HEK293 (cell line): ENCODE measurements at regions of chr18 and their contacts with region 1.

Region 1: GRCh38 chr18:54405290-54405689 is 47.6 kb downstream of the C18orf54 start:
- H3K4me3 ChIP-seq: no peak overlapping the region
- H3K27ac ChIP-seq: no peak overlapping the region
- H3K4me1 ChIP-seq: no peaks in the 10 kb centered on the region
- CTCF ChIP-seq: no peak

Region 2: GRCh38 chr18:54303408-54303807 is 101.9 kb before region 1 on chr18:
- CTCF ChIA-PET with region 1: no interaction called
- POLR2A ChIA-PET with region 1: no interaction called
- H3K4me3 ChIP-seq: no peak overlapping the region
- H3K27ac ChIP-seq: no peak overlapping the region
- H3K4me1 ChIP-seq: no peaks in the 10 kb centered on the region
- CTCF ChIP-seq: no peak

Region 3: DNA sequence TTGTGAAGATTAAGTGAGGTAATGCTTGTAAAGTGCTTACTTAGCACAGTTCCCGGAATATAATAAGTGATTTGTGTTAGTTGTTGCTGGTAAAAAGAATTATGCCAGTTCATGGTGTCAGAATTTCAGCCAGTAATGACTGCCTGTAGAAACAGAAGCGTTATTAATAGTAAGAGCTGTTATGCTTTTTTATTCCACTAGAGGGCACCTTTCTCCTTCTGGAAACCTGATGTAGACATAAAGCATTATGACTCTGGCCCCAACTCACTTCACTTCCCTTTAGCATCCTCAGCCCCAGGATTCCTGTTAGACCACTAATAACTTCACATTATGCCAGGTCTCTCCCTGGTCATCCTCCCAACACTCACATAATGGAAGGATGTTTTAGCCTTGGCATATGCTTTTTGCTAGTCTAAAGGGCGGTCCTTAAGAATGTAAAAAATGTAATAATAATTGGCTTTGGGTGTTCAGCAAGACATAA is 12.7 kb before region 1 on chr18:
- CTCF ChIA-PET with region 1: interaction called, 12 read pairs
- POLR2A ChIA-PET with region 1: no interaction called
- H3K4me3 ChIP-seq: no peak overlapping the region
- H3K27ac ChIP-seq: no peak overlapping the region
- H3K4me1 ChIP-seq: no peaks in the 10 kb centered on the region
- CTCF ChIP-seq: peak; percentile 43; the same call in 1 of the 2 replicates